CD8-positive, alpha-beta T cell (primary cell): ENCODE measurements at regions of chr15 and their contacts with region 1.

Region 1: GRCh38 chr15:89358755-89359439 is 24.3 kb upstream of the POLG start:
- DNase-seq: peak; percentile 71 to 90 (median 79)
- ATAC-seq: peak; percentile 87
- H3K4me3 ChIP-seq: peak overlapping the region; percentile 52 to 56
- H3K4me3 Mint-ChIP-seq: peak overlapping the region; percentile 81
- H3K27ac ChIP-seq: no peak overlapping the region
- H3K27ac Mint-ChIP-seq: no peak overlapping the region
- H3K4me1 ChIP-seq: peaks cover 8% of the 10 kb centered on the region
- H3K4me1 Mint-ChIP-seq: peaks cover 16% of the 10 kb centered on the region
- H3K27me3 ChIP-seq: peaks cover 46 to 55% of the 10 kb centered on the region in 2 experiments
- H3K27me3 Mint-ChIP-seq: peaks cover 77% of the 10 kb centered on the region
- CTCF ChIP-seq: peak; percentile 96

Region 2: GRCh38 chr15:87916208-87916607 is 1442.7 kb before region 1 on chr15:
- CTCF ChIA-PET with region 1: no interaction called
- POLR2A ChIA-PET with region 1: no interaction called
- intact Hi-C with region 1: no loop called
- DNase-seq: no peak
- ATAC-seq: no peak
- H3K4me3 ChIP-seq: no peak overlapping the region
- H3K4me3 Mint-ChIP-seq: no peak overlapping the region
- H3K27ac ChIP-seq: no peak overlapping the region
- H3K27ac Mint-ChIP-seq: no peak overlapping the region
- H3K4me1 ChIP-seq: no peaks in the 10 kb centered on the region
- H3K4me1 Mint-ChIP-seq: no peaks in the 10 kb centered on the region
- H3K27me3 ChIP-seq: no peaks in the 10 kb centered on the region
- H3K27me3 Mint-ChIP-seq: no peaks in the 10 kb centered on the region
- CTCF ChIP-seq: no peak

Region 3: DNA sequence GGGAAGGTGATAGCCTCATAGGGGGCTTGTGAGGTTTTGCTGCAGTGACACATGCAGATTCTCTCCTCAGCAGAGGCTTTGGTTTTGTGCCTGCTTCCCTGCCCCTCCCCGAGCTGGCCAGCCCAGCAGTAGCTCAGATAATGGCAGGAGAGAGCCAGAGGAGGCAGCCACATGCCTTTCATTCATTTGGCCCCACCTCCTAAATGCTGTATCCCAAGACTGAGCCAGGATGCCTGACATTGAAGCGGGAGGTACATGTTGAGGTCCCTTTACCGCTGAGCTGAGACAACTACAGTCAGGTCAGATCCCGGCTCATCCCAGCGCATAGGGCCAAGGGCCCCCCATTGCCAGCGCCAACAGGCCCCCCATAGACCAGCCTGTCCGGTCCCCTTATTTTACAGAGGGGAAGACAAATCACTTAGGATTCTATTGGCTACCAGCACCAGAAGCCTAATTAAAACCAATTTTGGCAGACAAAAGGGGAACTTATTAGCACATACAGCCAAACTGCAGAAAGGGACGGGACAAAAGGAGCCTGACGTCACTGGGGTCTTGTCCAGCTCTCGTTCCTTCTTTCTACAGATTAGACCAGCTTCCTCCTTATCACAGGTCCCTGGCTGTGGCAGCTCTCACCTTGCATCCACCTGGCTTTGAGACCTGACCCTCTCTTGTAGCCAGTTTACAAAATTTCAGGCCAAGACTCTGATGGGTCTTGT is 12.2 kb before region 1 on chr15:
- CTCF ChIA-PET with region 1: interaction called, 46 read pairs
- POLR2A ChIA-PET with region 1: no interaction called
- intact Hi-C with region 1: no loop called
- DNase-seq: no peak
- ATAC-seq: no peak
- H3K4me3 ChIP-seq: no peak overlapping the region
- H3K4me3 Mint-ChIP-seq: no peak overlapping the region
- H3K27ac ChIP-seq: no peak overlapping the region
- H3K27ac Mint-ChIP-seq: no peak overlapping the region
- H3K4me1 ChIP-seq: no peaks in the 10 kb centered on the region
- H3K4me1 Mint-ChIP-seq: no peaks in the 10 kb centered on the region
- H3K27me3 ChIP-seq: peaks cover 0 to 4% of the 10 kb centered on the region in 2 experiments
- H3K27me3 Mint-ChIP-seq: peaks cover 7% of the 10 kb centered on the region
- CTCF ChIP-seq: no peak

Region 4: GRCh38 chr15:89389841-89390603 is 31.1 kb after region 1 on chr15:
- CTCF ChIA-PET with region 1: interaction called, 14 read pairs
- POLR2A ChIA-PET with region 1: no interaction called
- intact Hi-C with region 1: no loop called
- DNase-seq: no peak
- ATAC-seq: no peak
- H3K4me3 ChIP-seq: no peak overlapping the region
- H3K4me3 Mint-ChIP-seq: no peak overlapping the region
- H3K27ac ChIP-seq: no peak overlapping the region
- H3K27ac Mint-ChIP-seq: no peak overlapping the region
- H3K4me1 ChIP-seq: no peaks in the 10 kb centered on the region
- H3K4me1 Mint-ChIP-seq: no peaks in the 10 kb centered on the region
- H3K27me3 ChIP-seq: no peaks in the 10 kb centered on the region
- H3K27me3 Mint-ChIP-seq: peaks cover 17% of the 10 kb centered on the region
- CTCF ChIP-seq: no peak

Region 5: GRCh38 chr15:89406940-89407607 is 48.2 kb after region 1 on chr15:
- CTCF ChIA-PET with region 1: interaction called, 24 read pairs
- POLR2A ChIA-PET with region 1: no interaction called
- intact Hi-C with region 1: no loop called
- DNase-seq: no peak
- ATAC-seq: no peak
- H3K4me3 ChIP-seq: no peak overlapping the region
- H3K4me3 Mint-ChIP-seq: peak overlapping the region; percentile 22
- H3K27ac ChIP-seq: no peak overlapping the region
- H3K27ac Mint-ChIP-seq: no peak overlapping the region
- H3K4me1 ChIP-seq: peaks cover 38% of the 10 kb centered on the region
- H3K4me1 Mint-ChIP-seq: peaks cover 48% of the 10 kb centered on the region
- H3K27me3 ChIP-seq: peaks cover 47 to 60% of the 10 kb centered on the region in 2 experiments
- H3K27me3 Mint-ChIP-seq: peaks cover 80% of the 10 kb centered on the region
- CTCF ChIP-seq: no peak

Region 6: DNA sequence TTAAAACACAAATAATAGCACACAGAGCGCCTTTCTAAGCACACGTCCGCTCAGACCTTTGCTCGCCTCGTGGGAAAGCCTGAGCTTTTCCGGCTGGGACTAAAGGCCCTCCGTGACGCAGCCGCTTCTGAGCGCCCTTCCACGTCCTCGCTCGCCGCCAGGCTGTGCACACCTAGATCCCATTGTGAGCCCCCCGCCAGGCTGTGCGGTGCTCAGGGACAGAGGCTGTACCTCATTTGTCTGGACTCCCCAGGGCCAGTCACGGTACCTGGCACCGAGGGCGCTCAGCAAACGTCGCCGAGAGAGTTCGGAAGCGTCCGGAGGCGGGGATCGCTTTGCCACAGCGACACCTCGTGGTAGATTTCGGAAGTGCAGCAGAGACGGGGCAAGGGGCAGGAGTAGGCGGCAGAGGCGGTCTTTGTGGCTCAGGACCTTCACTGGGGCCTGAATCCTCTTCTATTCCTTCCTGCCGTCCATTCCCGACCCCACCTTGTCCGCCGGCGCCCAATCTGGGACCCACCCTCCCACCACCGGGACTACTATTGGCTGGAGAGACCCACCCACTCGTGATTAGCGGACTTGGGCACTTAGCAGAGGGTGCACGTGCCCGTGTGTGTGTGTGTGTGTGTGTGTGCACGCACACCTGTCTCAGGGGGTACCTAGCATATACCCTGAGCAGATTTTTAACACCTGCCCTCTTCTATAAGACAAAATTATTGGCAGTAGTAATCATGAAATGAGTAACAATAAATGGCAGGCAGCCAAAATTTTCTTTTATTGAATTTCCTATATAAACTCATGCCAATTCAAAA is 71.8 kb after region 1 on chr15:
- CTCF ChIA-PET with region 1: interaction called, 121 read pairs
- POLR2A ChIA-PET with region 1: interaction called, 3 read pairs
- intact Hi-C with region 1: loop called (anchors 1 kb)
- DNase-seq: peak; percentile 75 to 95 (median 84)
- ATAC-seq: peak; percentile 95
- H3K4me3 ChIP-seq: peak overlapping the region; percentile 38 to 49
- H3K4me3 Mint-ChIP-seq: peak overlapping the region; percentile 79
- H3K27ac ChIP-seq: no peak overlapping the region
- H3K27ac Mint-ChIP-seq: no peak overlapping the region
- H3K4me1 ChIP-seq: no peaks in the 10 kb centered on the region
- H3K4me1 Mint-ChIP-seq: peaks cover 6% of the 10 kb centered on the region
- H3K27me3 ChIP-seq: peaks cover 0 to 4% of the 10 kb centered on the region in 2 experiments
- H3K27me3 Mint-ChIP-seq: peaks cover 23% of the 10 kb centered on the region
- CTCF ChIP-seq: peak; percentile 92

Region 7: GRCh38 chr15:89556413-89557262 is 197.7 kb after region 1 on chr15:
- CTCF ChIA-PET with region 1: no interaction called
- POLR2A ChIA-PET with region 1: no interaction called
- intact Hi-C with region 1: loop called in 1 of 2 experiments (anchors 2 kb)
- DNase-seq: peak in 7 of 9 experiments; percentile 16 to 66 (median 49)
- ATAC-seq: no peak
- H3K4me3 ChIP-seq: no peak overlapping the region
- H3K4me3 Mint-ChIP-seq: no peak overlapping the region
- H3K27ac ChIP-seq: no peak overlapping the region
- H3K27ac Mint-ChIP-seq: no peak overlapping the region
- H3K4me1 ChIP-seq: no peaks in the 10 kb centered on the region
- H3K4me1 Mint-ChIP-seq: no peaks in the 10 kb centered on the region
- H3K27me3 ChIP-seq: no peaks in the 10 kb centered on the region
- H3K27me3 Mint-ChIP-seq: peaks cover 16% of the 10 kb centered on the region
- CTCF ChIP-seq: peak; percentile 85